Posterior cingulate gyrus (tissue), 11 donors: ENCODE measurements at regions of chr11 and their contacts with region 1.

Region 1: GRCh38 chr11:106076919-106077608 is at the start of gene KBTBD3:
- DNase-seq: peak; percentile 99 to 100 (median 100)

Region 2: DNA sequence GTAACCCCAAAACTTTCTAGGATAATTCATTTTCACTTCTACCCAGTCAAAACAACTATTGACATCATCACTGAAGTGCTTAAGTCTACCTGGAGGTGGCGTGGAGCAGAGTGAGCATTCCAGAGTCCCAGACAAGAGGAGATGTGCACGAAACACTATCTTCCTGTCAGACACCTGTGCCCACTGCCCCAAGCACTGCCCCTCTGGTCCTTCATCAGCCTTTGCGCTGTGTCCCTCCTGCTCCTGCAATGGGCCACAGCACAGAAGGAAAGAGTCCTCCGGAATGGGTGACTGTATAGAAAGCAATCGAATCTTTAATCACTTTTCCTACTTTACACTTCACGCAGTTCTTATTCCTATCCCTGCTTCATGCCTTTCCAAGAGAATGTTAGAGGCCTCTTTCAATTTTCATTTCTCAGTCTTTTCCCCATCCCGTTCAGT is 467.7 kb before region 1 on chr11:
- intact Hi-C with region 1: loop called (anchors 10 kb)
- DNase-seq: peak in 8 of 10 donors; percentile 25 to 90 (median 50)

Region 3: GRCh38 chr11:105899772-105900171 is 177.3 kb before region 1 on chr11:
- intact Hi-C with region 1: loop called (anchors 10 kb)
- DNase-seq: no peak

Region 4: GRCh38 chr11:105942921-105943320 is 134.1 kb before region 1 on chr11:
- intact Hi-C with region 1: loop called (anchors 10 kb)
- DNase-seq: no peak

Region 5: GRCh38 chr11:106021967-106022794 is 54.9 kb before region 1 on chr11 and contains the start of gene MSANTD4:
- intact Hi-C with region 1: loop called (anchors 1 kb)
- DNase-seq: peak; percentile 99 to 100 (median 100)